ENCODE measurements at regions of chr11 and their contacts with region 1.

Region 1: GRCh38 chr11:68206187-68206601 is 6.9 kb downstream of the KMT5B start:
- DNase-seq: no peak
- ATAC-seq: peak in 3 of 4 donors; percentile 38 to 40 (median 38)
- H3K4me3 ChIP-seq: no peak overlapping the region
- H3K27ac ChIP-seq: no peak overlapping the region
- H3K4me1 ChIP-seq: peaks cover 0 to 84% (median 66%) of the 10 kb centered on the region in 12 donors
- H3K27me3 ChIP-seq: no peaks in the 10 kb centered on the region
- CTCF ChIP-seq: peak; percentile 70 to 88 (median 80)
- POLR2A ChIP-seq: no peak

Region 2: GRCh38 chr11:68003846-68004550 is 202.2 kb before region 1 on chr11 and contains the start of gene UNC93B1:
- intact Hi-C with region 1: loop called in 1 of 10 experiments (anchors 10 kb)
- DNase-seq: peak; percentile 90 to 96 (median 93)
- ATAC-seq: peak; percentile 82 to 96 (median 90)
- H3K4me3 ChIP-seq: peak within 1 kb of the TSS; percentile 57 to 86 (median 70)
- H3K27ac ChIP-seq: peak within 1 kb of the TSS in 11 of 12 donors; percentile 53 to 94 (median 72)
- H3K4me1 ChIP-seq: peaks cover 0 to 37% (median 9%) of the 10 kb centered on the region in 12 donors
- H3K27me3 ChIP-seq: no peaks in the 10 kb centered on the region
- CTCF ChIP-seq: no peak
- POLR2A ChIP-seq: peak in 1 of 2 donors; percentile 61
- total RNA-seq, gene UNC93B1: 5.2 to 34.2 (median 7.9) TPM

Region 3: DNA sequence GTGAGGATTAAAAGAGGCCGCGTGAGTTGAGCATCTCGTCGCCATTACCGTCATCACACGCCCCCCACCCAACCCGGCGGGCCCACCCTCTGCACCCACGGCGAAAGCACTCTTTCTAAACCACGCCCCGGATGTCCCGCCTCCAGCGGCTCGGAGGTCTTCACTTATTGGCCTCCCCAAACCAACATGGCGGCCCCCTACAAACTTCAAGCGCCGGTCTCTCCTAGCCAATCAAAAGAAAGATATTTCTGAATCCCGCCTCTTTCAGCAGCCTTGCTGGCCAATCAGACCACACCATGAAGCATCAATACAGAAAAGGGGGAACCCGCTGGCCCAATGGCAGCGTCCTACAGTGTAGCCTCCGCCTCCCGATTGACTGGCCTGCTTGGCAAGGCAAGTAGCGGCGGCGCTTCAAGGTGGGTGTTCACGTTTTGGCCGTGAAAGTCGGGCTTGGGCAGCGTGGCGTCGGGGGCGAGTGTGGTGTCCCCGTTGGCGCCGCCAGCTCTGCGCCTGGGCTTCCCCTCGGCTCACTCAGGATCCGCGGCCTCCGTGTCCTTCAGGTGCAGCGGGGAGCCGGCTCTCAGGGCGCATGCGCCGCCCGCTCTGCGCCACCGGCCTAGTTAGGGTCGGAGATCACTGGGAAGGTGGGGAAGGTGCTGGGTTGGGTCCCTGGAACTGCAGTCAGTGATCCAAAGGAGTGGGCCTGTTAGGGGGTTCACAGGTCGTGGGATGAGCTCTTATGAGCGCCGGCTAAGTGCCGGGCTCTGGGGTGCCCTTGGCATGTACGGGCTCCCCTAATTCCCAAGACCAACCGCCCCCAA is 175.7 kb before region 1 on chr11 and contains the start of gene NDUFS8:
- intact Hi-C with region 1: loop called in 4 of 10 experiments (anchors 5 to 10 kb)
- DNase-seq: peak; percentile 95 to 98 (median 97)
- ATAC-seq: peak; percentile 90 to 96 (median 94)
- H3K4me3 ChIP-seq: peak within 1 kb of the TSS; percentile 63 to 94 (median 85)
- H3K27ac ChIP-seq: peak within 1 kb of the TSS; percentile 85 to 98 (median 93)
- H3K4me1 ChIP-seq: peaks cover 0 to 46% (median 30%) of the 10 kb centered on the region in 12 donors
- H3K27me3 ChIP-seq: no peaks in the 10 kb centered on the region
- CTCF ChIP-seq: no peak
- POLR2A ChIP-seq: peak in 1 of 2 donors; percentile 71
- total RNA-seq, gene NDUFS8: 262 to 948 (median 365) TPM

Region 4: GRCh38 chr11:68076371-68077042 is 129.7 kb before region 1 on chr11:
- intact Hi-C with region 1: loop called in 4 of 10 experiments (anchors 10 kb)
- DNase-seq: no peak
- ATAC-seq: no peak
- H3K4me3 ChIP-seq: no peak overlapping the region
- H3K27ac ChIP-seq: no peak overlapping the region
- H3K4me1 ChIP-seq: peaks cover 0 to 5% (median 0%) of the 10 kb centered on the region in 12 donors
- H3K27me3 ChIP-seq: no peaks in the 10 kb centered on the region
- CTCF ChIP-seq: peak in 5 of 12 donors; percentile 16 to 25 (median 21)
- POLR2A ChIP-seq: no peak

Region 5: DNA sequence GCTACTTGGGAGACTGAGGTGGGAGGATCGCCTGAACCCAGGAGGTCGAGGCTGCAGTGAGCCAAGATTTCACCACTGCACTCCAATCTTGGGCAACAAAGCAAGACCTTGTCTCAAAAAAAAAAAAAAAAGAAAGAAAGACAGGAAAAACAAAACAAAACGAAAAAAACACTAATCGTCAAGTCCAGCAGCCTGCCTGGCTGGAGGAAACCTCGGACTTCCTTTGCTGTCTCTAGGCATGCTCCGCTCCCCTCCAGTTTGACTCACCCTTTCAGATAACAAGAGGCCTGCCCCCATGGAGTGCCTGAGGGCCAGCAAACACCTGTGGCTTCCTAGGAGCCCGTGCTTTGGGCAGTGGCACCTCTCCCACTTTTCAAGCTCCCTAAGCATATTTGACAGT is 56.2 kb before region 1 on chr11:
- intact Hi-C with region 1: no loop called
- DNase-seq: no peak
- ATAC-seq: no peak
- H3K4me3 ChIP-seq: no peak overlapping the region
- H3K27ac ChIP-seq: no peak overlapping the region
- H3K4me1 ChIP-seq: peaks cover 0 to 24% (median 19%) of the 10 kb centered on the region in 12 donors
- H3K27me3 ChIP-seq: no peaks in the 10 kb centered on the region
- CTCF ChIP-seq: no peak
- POLR2A ChIP-seq: no peak

Region 6: DNA sequence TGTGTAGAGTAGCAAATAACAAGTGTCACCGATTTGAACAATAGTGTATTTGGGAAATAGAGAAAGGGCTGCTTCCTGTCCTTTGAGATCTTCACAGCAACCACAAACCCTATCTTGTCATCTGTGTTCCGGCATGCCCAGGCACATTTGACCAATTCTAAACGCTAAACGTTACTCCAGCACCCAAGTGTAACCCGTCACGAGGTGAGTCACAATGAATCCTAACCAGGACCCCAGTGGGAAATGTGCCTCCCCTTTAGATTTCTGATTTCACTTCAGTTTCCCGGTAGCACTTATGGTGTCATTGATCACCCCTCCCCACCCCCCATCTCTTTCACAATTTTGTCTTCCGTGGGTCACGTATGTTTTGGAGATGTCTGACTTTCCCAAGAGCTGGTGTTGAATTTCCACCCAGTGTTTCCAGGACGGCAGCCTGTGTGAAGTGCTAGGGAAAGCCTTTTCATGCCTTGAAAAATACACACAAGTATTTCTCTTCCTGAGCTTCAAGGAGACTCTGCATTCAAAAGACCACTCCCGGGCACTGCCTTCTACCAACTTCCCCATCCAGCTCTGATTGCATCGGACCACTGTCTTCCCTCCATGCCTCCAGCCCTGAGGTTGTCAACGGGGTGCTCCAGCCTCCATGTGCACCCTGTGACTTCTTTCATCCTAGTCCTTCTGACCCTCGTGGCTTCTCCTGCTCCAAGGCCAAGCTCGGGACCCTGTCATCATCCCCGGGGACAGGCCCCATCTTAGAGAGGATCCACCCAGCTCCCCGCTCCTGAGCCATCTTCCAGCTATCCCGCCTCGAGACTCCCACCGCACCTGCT is 76.2 kb after region 1 on chr11:
- intact Hi-C with region 1: no loop called
- DNase-seq: no peak
- ATAC-seq: no peak
- H3K4me3 ChIP-seq: no peak overlapping the region
- H3K27ac ChIP-seq: no peak overlapping the region
- H3K4me1 ChIP-seq: peaks cover 0 to 13% (median 2%) of the 10 kb centered on the region in 12 donors
- H3K27me3 ChIP-seq: no peaks in the 10 kb centered on the region
- CTCF ChIP-seq: no peak
- POLR2A ChIP-seq: no peak

Region 7: DNA sequence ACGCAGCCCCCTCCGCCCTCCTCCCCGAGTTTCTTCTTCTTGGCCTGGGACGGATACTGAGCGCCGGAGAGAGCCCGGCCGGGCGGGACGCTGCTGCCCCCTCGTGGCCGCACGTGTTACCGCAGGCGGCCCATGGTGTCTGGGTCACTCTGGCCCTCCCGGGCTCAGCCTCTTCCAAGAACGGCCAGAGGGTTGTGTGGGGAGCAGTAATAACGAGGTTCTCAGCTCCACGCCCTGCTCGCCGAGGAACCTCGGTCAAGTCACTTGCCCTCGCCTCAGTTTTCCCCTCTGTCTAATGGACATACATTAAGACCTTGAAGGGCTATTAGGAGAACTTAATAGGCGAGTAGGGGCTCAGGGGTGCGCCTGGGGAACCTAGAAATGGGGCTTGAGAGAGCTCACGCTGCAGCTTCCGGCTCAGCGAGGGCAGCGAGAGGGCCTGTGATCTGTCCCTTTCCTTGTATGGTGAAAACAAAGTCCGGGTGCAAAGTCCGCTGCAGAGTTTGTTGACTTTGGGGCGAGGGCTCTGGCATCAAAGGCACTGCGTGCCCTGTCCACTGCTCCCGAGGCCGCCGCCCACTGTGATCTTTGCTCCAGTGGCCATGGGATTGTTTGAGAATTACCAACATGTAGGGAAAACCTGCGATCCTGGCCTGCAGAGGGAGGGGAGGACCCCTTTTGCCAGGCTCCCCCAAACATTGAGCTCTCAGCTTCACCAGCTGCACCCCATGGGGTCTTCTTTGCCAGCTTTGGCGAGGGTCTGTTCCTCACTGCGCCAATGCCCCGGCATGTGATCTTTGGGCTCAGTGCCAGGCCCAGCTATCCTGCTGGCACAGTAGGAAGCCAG is 91.8 kb after region 1 on chr11:
- intact Hi-C with region 1: loop called in 3 of 10 experiments (anchors 5 to 10 kb)
- DNase-seq: peak; percentile 77 to 92 (median 80)
- ATAC-seq: peak; percentile 93 to 97 (median 96)
- H3K4me3 ChIP-seq: peak overlapping the region in 5 of 12 donors; percentile 3 to 28 (median 10)
- H3K27ac ChIP-seq: no peak overlapping the region
- H3K4me1 ChIP-seq: peaks cover 0 to 22% (median 12%) of the 10 kb centered on the region in 12 donors
- H3K27me3 ChIP-seq: no peaks in the 10 kb centered on the region
- CTCF ChIP-seq: peak in 11 of 12 donors; percentile 94 to 99 (median 98)
- POLR2A ChIP-seq: no peak

Region 8: DNA sequence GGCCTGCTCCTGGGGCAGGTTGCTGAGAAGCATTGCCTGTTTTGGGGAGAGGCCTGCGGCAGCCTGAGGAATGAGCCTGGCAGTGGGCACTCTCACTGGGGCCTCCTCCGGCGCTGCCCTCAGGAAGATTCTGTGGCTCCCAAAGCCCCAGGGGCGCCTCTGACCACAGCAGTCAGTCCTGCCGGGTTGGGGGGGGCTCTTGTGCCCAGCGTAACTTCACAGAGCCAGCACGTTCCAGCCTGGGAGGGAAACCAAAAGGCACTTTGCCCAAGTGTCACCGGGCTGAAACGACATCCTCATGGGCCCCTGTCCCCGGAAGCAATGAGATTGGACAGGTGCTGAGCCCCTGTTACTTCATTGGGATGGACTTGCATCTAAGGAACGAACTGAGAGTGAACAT is 101.9 kb after region 1 on chr11:
- intact Hi-C with region 1: no loop called
- DNase-seq: peak in 2 of 5 donors; percentile 65 to 71
- ATAC-seq: peak; percentile 31 to 79 (median 60)
- H3K4me3 ChIP-seq: no peak overlapping the region
- H3K27ac ChIP-seq: peak overlapping the region in 8 of 12 donors; percentile 29 to 78 (median 62)
- H3K4me1 ChIP-seq: peaks cover 0 to 13% (median 2%) of the 10 kb centered on the region in 12 donors
- H3K27me3 ChIP-seq: peaks cover 0 to under 1% (median 0%) of the 10 kb centered on the region in 9 donors
- CTCF ChIP-seq: no peak
- POLR2A ChIP-seq: no peak

Measured in heart left ventricle (tissue), 16 donors.